ENCODE measurements at regions of chr10 and their contacts with region 1.

Region 1: GRCh38 chr10:37976091-37976879 is at the start of gene ZNF25:
- DNase-seq: peak; percentile 98 to 99
- H3K4me3 ChIP-seq: peak within 1 kb of the TSS; percentile 78 to 85 (median 84)
- H3K27ac ChIP-seq: peak within 1 kb of the TSS; percentile 96 to 97 (median 97)
- H3K4me1 ChIP-seq: peaks cover 6 to 7% of the 10 kb centered on the region in 2 donors
- H3K27me3 ChIP-seq: no peaks in the 10 kb centered on the region
- CTCF ChIP-seq: peak; percentile 65 to 94 (median 86)
- POLR2A ChIP-seq: peak in 1 of 2 donors; percentile 88
- total RNA-seq, gene ZNF25: 8.4 to 17.1 (median 12.0) TPM

Region 2: DNA sequence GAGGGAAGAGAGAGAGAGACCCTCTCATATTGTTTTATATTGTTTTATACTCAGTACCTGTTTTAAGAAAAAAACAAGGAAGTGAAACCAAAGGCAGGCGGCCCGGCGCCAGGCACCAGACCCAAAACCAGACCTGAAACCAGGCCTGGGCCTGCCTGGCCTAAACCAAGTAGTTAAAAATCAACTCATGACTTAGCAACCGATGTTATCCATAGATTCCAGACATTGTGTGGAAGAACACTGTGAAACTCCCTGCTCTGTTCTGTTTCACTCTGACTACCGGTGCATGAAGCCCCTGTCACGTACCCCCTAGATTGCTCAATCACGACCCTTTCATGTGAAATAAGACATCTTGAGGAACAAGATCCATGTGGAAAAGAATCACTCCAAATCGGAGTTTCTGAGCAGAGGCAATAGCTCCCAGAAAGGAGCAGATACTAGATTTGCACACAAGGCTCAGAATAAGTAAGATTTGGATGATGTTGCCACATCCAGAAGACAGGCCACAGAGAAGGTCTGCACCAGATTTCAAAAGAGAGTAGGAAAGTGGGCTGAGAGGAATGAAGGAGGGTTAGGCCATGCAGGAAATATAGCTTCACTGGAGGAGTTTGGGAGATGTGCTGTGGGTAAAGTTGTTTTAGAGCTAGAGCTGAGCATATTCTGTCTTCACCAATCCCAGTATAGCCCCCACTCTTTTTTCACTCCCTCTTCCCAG is 110.2 kb before region 1 on chr10:
- intact Hi-C with region 1: loop called (anchors 5 kb)
- DNase-seq: no peak
- H3K4me3 ChIP-seq: no peak overlapping the region
- H3K27ac ChIP-seq: no peak overlapping the region
- H3K4me1 ChIP-seq: peaks cover 0 to 3% of the 10 kb centered on the region in 2 donors
- H3K27me3 ChIP-seq: no peaks in the 10 kb centered on the region
- CTCF ChIP-seq: no peak
- POLR2A ChIP-seq: no peak

Region 3: GRCh38 chr10:38054361-38054797 is 78.1 kb after region 1 on chr10:
- intact Hi-C with region 1: no loop called
- DNase-seq: no peak
- H3K4me3 ChIP-seq: no peak overlapping the region
- H3K27ac ChIP-seq: no peak overlapping the region
- H3K4me1 ChIP-seq: no peaks in the 10 kb centered on the region
- H3K27me3 ChIP-seq: no peaks in the 10 kb centered on the region
- CTCF ChIP-seq: no peak
- POLR2A ChIP-seq: no peak

Region 4: GRCh38 chr10:38094158-38094920 is 118.1 kb after region 1 on chr10 and contains the start of gene ZNF37A:
- intact Hi-C with region 1: loop called (anchors 10 kb)
- DNase-seq: peak; percentile 95 to 96
- H3K4me3 ChIP-seq: peak within 1 kb of the TSS; percentile 25 to 88 (median 86)
- H3K27ac ChIP-seq: peak within 1 kb of the TSS; percentile 25 to 90 (median 81)
- H3K4me1 ChIP-seq: peaks cover 7 to 8% of the 10 kb centered on the region in 2 donors
- H3K27me3 ChIP-seq: no peaks in the 10 kb centered on the region
- CTCF ChIP-seq: peak in 1 of 6 experiments; percentile 25
- POLR2A ChIP-seq: peak in 1 of 2 donors; percentile 84
- total RNA-seq, gene ZNF37A: 20.9 to 45.2 (median 25.2) TPM